Activated CD8-positive, alpha-beta T cell treated with anti-CD3 and anti-CD28 coated beads for 36 hours (primary cell): ENCODE measurements at regions of chr12 and their contacts with region 1.

Region 1: DNA sequence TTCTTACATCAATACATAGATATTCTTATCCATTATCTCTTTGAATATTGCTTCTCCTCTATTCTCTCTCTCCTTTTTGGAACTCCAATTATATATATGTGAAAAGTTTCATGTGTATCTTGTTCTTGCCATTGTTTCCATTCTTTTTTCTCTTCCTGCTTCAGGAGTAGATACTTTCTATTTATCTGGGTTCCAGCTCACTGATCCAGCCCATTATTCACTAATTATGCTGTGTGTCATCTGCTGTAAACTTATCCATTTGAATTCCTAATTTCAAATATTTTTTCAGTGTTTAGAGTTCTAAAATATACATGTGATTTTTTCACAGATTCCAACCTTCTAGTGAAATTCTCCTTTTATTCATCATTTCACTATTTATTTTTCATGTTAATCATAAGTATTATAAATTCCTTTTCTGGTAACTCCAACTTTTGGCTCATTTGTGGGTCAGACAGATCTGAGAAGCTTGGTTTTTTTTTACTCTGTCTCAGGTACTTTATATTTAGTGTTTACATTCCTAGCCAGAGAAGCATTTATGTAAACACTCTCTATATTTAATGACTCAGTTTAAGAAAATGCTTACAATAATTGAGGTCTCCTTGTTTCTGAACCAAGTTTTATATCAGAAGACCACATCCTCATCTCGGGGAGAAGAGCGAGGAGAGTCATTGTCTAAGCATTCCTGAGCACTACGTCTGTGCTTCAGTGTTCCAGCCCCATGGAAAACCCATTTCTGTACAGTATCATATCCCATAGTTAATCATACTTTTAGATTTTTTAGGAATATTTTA is 15.9 kb upstream of the AMIGO2 start:
- DNase-seq: no peak
- ATAC-seq: no peak
- H3K4me3 Mint-ChIP-seq: no peak overlapping the region
- H3K27ac Mint-ChIP-seq: no peak overlapping the region
- H3K4me1 Mint-ChIP-seq: peaks cover 36% of the 10 kb centered on the region
- H3K27me3 Mint-ChIP-seq: no peaks in the 10 kb centered on the region
- CTCF ChIP-seq: no peak

Region 2: DNA sequence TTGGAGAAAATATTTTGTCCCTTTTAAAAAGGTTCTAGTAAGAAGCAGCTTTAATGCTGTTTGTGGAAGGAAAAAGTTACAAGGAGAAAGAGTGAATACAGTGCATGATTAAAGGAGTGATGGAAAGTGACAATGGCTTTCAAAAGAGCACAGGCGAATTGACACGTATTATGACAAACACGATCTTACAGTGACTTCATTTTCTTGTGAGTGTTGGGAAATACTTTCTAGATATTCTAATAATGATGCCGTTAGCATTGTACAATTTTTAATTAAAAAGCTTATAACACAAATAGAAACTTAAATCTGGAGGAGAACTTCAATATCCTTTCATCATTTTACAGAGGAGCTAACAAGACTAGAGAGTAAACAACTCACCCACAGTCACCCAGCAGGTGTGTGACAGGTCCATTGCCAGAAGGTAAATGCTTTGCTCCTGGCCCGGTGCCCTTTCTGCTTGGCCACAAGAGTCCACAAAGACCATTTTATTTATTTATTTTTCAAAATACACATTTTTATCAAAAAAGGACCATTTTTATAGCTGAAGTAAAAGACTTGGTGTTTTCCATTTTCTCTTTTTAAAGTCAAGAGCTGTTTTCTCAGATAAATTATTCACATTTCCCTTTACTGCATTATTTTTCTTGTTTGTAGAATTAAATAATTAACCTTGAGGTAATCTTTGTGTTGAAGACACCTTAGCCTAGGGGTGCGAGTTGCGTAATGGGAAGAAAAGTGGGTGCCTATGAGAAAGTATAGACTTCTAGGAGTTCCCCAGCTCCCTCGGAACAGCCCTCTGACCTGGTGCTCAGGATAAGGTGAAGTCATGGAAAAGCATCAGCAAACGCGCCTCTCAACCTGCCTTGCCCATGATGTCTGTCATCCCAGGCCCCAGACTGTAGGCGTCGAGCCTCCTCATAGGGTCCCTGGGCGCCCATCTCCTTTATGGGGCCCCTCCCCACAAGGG is 10.3 kb after region 1 on chr12:
- CTCF ChIA-PET with region 1: interaction called, 10 read pairs
- POLR2A ChIA-PET with region 1: no interaction called
- intact Hi-C with region 1: no loop called
- DNase-seq: no peak
- ATAC-seq: no peak
- H3K4me3 Mint-ChIP-seq: no peak overlapping the region
- H3K27ac Mint-ChIP-seq: no peak overlapping the region
- H3K4me1 Mint-ChIP-seq: peaks cover 18% of the 10 kb centered on the region
- H3K27me3 Mint-ChIP-seq: no peaks in the 10 kb centered on the region
- CTCF ChIP-seq: no peak